ENCODE measurements at regions of chr15 and their contacts with region 1.

Region 1: DNA sequence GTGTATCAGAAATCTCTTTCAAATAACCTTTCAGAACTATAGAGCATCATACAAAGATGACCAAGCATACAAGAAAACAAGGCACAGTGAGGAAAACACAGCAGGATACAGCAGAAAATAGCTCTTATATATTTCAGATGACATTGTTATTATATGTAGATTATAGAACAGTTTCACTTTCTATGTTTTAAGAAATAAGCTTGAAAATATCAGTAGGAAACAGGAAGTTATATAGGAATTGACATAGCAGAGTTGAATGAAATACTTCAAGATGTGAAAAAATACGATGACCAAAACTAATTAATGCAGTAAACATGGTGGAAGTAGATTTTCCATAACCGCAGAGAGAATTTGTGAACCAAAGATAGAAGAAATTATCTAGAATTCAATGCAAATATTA is 75.2 kb downstream of the LYSMD4 start:
- DNase-seq: peak in 1 of 14 experiments; percentile 1
- ATAC-seq: no peak
- H3K4me3 ChIP-seq: no peak overlapping the region
- H3K4me3 Mint-ChIP-seq: no peak overlapping the region
- H3K27ac ChIP-seq: no peak overlapping the region
- H3K27ac Mint-ChIP-seq: no peak overlapping the region
- H3K4me1 ChIP-seq: no peaks in the 10 kb centered on the region
- H3K4me1 Mint-ChIP-seq: peaks cover 37% of the 10 kb centered on the region
- H3K27me3 ChIP-seq: no peaks in the 10 kb centered on the region
- H3K27me3 Mint-ChIP-seq: no peaks in the 10 kb centered on the region
- CTCF ChIP-seq: no peak

Region 2: DNA sequence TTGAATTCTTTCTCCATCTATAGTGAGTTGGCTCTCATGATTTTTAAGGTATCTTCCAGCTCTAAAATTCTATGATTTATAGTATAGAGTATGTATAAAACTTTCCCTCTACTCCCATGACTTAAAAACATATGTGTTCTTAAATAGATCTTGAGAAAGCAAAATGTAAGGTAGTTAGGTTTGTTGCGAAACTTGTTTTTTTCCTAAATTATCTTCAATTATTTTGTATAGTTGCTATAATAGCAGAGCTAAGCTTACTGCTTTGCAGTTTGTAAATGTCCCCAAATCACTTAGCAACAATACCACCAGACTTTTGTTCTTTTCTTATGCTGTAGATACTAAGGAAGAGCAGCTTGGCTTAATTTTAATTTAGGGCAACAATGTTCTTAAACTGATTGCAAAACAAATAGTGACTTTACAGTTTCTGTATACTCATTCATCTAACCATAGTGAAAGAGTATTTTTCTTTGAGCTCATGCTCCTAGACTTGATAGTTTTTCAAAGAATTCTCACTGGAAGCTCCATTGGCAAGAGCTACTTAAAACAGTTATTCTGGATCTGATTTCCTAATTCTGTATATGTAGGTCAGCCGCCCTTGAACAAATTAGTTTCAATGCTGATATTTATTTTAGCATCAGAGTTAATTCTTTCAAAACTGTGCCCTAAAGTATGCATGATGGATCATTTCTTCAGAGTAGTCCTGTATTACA is 14.1 kb after region 1 on chr15:
- CTCF ChIA-PET with region 1: interaction called, 3 read pairs
- POLR2A ChIA-PET with region 1: no interaction called
- intact Hi-C with region 1: loop called in 1 of 2 experiments (anchors 1 kb)
- DNase-seq: no peak
- ATAC-seq: no peak
- H3K4me3 ChIP-seq: no peak overlapping the region
- H3K4me3 Mint-ChIP-seq: no peak overlapping the region
- H3K27ac ChIP-seq: no peak overlapping the region
- H3K27ac Mint-ChIP-seq: no peak overlapping the region
- H3K4me1 ChIP-seq: no peaks in the 10 kb centered on the region
- H3K4me1 Mint-ChIP-seq: no peaks in the 10 kb centered on the region
- H3K27me3 ChIP-seq: no peaks in the 10 kb centered on the region
- H3K27me3 Mint-ChIP-seq: no peaks in the 10 kb centered on the region
- CTCF ChIP-seq: no peak

Measured in CD4-positive, alpha-beta T cell (primary cell).